ENCODE measurements at regions of chr3 and their contacts with region 1.

Region 1: GRCh38 chr3:195063581-195064193 is 207.3 kb downstream of the XXYLT1 start:
- DNase-seq: peak in 1 of 5 donors; percentile 6
- ATAC-seq: no peak
- H3K4me3 ChIP-seq: no peak overlapping the region
- H3K27ac ChIP-seq: peak overlapping the region in 5 of 12 donors; percentile 19 to 78 (median 70)
- H3K4me1 ChIP-seq: peaks cover 0 to 28% (median 13%) of the 10 kb centered on the region in 12 donors
- H3K27me3 ChIP-seq: no peaks in the 10 kb centered on the region
- CTCF ChIP-seq: no peak
- POLR2A ChIP-seq: no peak

Region 2: GRCh38 chr3:195095035-195095703 is 31.5 kb after region 1 on chr3:
- intact Hi-C with region 1: loop called in 1 of 10 experiments (anchors 5 kb)
- DNase-seq: peak in 1 of 5 donors; percentile 31
- ATAC-seq: no peak
- H3K4me3 ChIP-seq: no peak overlapping the region
- H3K27ac ChIP-seq: no peak overlapping the region
- H3K4me1 ChIP-seq: peaks cover 0 to 23% (median 10%) of the 10 kb centered on the region in 12 donors
- H3K27me3 ChIP-seq: no peaks in the 10 kb centered on the region
- CTCF ChIP-seq: no peak
- POLR2A ChIP-seq: no peak

Measured in heart left ventricle (tissue), 16 donors.